IMR-90 (cell line): ENCODE measurements at regions of chr1 and their contacts with region 1.

Region 1: DNA sequence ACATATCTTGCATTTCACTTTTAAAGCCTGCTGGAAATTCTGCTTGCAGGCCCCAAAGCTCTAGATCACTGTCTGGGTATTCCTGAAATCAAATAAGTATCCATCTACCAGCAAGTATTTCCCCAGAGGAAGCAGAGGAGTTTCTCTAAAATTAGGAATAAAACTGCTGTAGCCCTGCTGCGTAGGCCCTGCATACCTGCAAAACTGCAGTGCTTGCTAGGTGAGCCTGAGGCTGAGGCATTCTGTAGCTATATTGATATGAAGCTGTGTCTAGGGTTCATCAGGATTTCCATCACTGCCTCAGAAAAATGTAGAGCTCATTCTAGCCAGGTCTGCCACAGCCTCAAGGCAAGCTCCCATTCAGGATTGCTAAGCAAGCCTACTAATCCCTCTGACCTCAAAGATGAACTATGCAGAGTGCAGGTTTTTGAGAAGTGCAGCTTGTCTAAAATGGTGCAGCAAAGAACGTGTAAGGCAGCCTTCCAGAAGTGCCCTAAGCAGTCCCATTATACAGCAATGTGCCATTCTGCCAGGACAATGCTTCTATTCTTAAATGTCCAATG is 28.6 kb downstream of the NPHS2 start:
- DNase-seq: no peak
- ATAC-seq: no peak
- H3K4me3 ChIP-seq: no peak overlapping the region
- H3K27ac ChIP-seq: no peak overlapping the region
- H3K4me1 ChIP-seq: no peaks in the 10 kb centered on the region
- H3K27me3 ChIP-seq: peaks cover 2% of the 10 kb centered on the region; the same call in 1 of the 2 replicates
- CTCF ChIP-seq: no peak
- POLR2A ChIP-seq: no peak
- RAD21 ChIP-seq: no peak

Region 2: DNA sequence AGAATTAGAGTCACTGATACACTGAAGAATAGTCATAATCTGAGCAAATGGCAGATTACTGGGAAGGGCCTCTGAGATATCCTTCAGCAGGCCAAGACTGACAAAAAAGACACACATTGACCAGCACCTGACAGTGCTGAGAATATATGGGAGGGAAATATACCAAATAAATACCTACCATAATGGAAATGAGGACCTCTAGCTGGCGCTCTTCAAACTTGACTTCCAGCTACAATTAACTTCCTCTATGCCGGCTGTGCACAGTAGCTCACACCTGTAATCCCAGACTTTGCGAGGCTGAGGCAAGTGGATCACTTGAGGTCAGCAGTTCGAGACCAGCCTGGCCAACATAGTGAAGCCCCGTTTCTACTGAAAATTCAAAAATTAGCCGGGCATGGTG is 40.9 kb before region 1 on chr1:
- CTCF ChIA-PET with region 1: no interaction called
- POLR2A ChIA-PET with region 1: no interaction called
- dilution Hi-C with region 1: no loop called
- in situ Hi-C with region 1: no loop called
- intact Hi-C with region 1: no loop called
- DNase-seq: no peak
- ATAC-seq: no peak
- H3K4me3 ChIP-seq: no peak overlapping the region
- H3K27ac ChIP-seq: no peak overlapping the region
- H3K4me1 ChIP-seq: no peaks in the 10 kb centered on the region
- H3K27me3 ChIP-seq: no peaks in the 10 kb centered on the region
- CTCF ChIP-seq: no peak
- POLR2A ChIP-seq: no peak
- RAD21 ChIP-seq: no peak

Region 3: GRCh38 chr1:179586107-179586823 is 39.2 kb after region 1 on chr1:
- CTCF ChIA-PET with region 1: no interaction called
- POLR2A ChIA-PET with region 1: interaction called, 11 read pairs
- dilution Hi-C with region 1: no loop called
- in situ Hi-C with region 1: no loop called
- intact Hi-C with region 1: no loop called
- DNase-seq: no peak
- ATAC-seq: peak; percentile 83
- H3K4me3 ChIP-seq: no peak overlapping the region
- H3K27ac ChIP-seq: no peak overlapping the region
- H3K4me1 ChIP-seq: no peaks in the 10 kb centered on the region
- H3K27me3 ChIP-seq: peaks cover 24% of the 10 kb centered on the region
- CTCF ChIP-seq: 0 out of 2 replicates have a peak, but pooled peaks have one; percentile 27
- POLR2A ChIP-seq: no peak
- RAD21 ChIP-seq: no peak

Region 4: DNA sequence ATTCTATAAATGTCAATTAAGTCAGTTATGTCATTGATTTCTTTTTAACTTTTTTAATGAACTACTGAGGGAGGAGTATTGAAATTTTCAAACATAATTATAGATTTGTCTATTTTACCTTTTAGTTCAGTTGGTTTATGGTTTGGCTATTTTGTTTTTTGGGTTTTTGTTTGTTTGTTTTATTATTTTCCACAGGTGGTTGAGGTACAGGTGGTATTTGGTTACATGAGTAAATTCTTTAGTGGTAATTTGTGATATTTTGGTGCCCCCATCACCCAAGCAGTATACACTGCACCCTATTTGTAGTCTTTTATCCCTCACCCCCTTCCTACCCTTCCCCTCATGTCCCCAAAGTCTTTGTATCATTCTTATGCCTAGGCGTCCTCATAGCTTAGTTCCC is 54.0 kb after region 1 on chr1:
- CTCF ChIA-PET with region 1: no interaction called
- POLR2A ChIA-PET with region 1: no interaction called
- dilution Hi-C with region 1: no loop called
- in situ Hi-C with region 1: no loop called
- intact Hi-C with region 1: no loop called
- DNase-seq: no peak
- ATAC-seq: no peak
- H3K4me3 ChIP-seq: no peak overlapping the region
- H3K27ac ChIP-seq: no peak overlapping the region
- H3K4me1 ChIP-seq: no peaks in the 10 kb centered on the region
- H3K27me3 ChIP-seq: no peaks in the 10 kb centered on the region
- CTCF ChIP-seq: no peak
- POLR2A ChIP-seq: no peak
- RAD21 ChIP-seq: no peak